B cell (primary cell): ENCODE measurements at regions of chr6 and their contacts with region 1.

Region 1: GRCh38 chr6:132669690-132670291 is 10.8 kb upstream of the TAAR1 start:
- DNase-seq: peak; percentile 61
- ATAC-seq: peak; percentile 60
- H3K4me3 ChIP-seq: no peak overlapping the region
- H3K4me3 Mint-ChIP-seq: peak overlapping the region; percentile 44
- H3K27ac ChIP-seq: no peak overlapping the region
- H3K27ac Mint-ChIP-seq: peak overlapping the region; percentile 0
- H3K4me1 ChIP-seq: peaks cover 4 to 5% of the 10 kb centered on the region in 2 donors
- H3K4me1 Mint-ChIP-seq: peaks cover 6% of the 10 kb centered on the region
- H3K27me3 ChIP-seq: no peaks in the 10 kb centered on the region
- H3K27me3 Mint-ChIP-seq: no peaks in the 10 kb centered on the region
- CTCF ChIP-seq: peak; percentile 79

Region 2: DNA sequence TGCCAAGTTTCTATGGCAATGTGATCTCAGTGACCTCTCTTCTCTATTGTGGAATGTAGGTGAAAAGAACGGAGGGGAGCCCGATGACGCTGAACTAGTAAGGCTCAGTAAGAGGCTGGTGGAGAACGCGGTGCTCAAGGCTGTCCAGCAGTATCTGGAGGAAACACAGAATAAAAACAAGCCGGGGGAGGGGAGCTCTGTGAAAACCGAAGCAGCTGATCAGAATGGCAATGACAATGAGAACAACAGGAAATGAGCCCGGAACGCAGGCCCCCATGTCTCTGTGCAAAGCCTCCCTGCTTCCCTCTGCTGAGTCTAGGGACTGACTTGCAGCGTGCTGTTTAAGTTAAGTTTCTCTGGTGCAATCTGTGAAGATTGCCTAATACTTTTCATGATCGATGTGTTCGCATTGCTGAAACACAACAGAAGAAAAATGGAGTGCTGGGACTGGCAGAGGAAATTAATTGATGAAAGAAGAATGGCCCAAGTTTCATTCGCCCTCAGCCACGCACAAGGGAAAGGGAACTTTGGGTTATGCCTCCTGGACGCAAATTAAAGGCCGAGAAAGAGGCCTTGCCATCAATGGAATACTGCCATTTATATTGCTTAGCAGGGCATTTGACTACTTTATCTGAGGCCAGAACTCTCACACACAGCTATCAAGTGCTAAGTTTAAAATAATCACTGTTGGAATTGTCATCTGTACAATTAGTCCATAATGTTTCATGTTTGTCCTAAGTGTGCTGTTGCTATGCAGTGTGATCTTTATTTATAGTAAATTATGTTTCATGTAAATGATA is 1388.1 kb before region 1 on chr6:
- CTCF ChIA-PET with region 1: no interaction called
- POLR2A ChIA-PET with region 1: no interaction called
- intact Hi-C with region 1: no loop called
- DNase-seq: peak; percentile 50
- ATAC-seq: peak; percentile 95
- H3K4me3 ChIP-seq: peak overlapping the region in 3 of 5 experiments; percentile 35 to 53 (median 41)
- H3K4me3 Mint-ChIP-seq: peak overlapping the region; percentile 86
- H3K27ac ChIP-seq: peak overlapping the region; percentile 42 to 75
- H3K27ac Mint-ChIP-seq: peak overlapping the region; percentile 94
- H3K4me1 ChIP-seq: peaks cover 12 to 18% of the 10 kb centered on the region in 2 donors
- H3K4me1 Mint-ChIP-seq: peaks cover 18% of the 10 kb centered on the region
- H3K27me3 ChIP-seq: no peaks in the 10 kb centered on the region
- H3K27me3 Mint-ChIP-seq: no peaks in the 10 kb centered on the region
- CTCF ChIP-seq: no peak

Region 3: GRCh38 chr6:132530293-132530974 is 139.4 kb before region 1 on chr6:
- CTCF ChIA-PET with region 1: interaction called, 20 read pairs
- POLR2A ChIA-PET with region 1: no interaction called
- intact Hi-C with region 1: loop called (anchors 1 kb)
- DNase-seq: peak; percentile 82
- ATAC-seq: peak; percentile 71
- H3K4me3 ChIP-seq: peak overlapping the region in 4 of 5 experiments; percentile 7 to 54 (median 46)
- H3K4me3 Mint-ChIP-seq: peak overlapping the region; percentile 85
- H3K27ac ChIP-seq: no peak overlapping the region
- H3K27ac Mint-ChIP-seq: peak overlapping the region; percentile 77
- H3K4me1 ChIP-seq: peaks cover 3 to 4% of the 10 kb centered on the region in 2 donors
- H3K4me1 Mint-ChIP-seq: peaks cover 4% of the 10 kb centered on the region
- H3K27me3 ChIP-seq: no peaks in the 10 kb centered on the region
- H3K27me3 Mint-ChIP-seq: no peaks in the 10 kb centered on the region
- CTCF ChIP-seq: peak; percentile 90

Region 4: DNA sequence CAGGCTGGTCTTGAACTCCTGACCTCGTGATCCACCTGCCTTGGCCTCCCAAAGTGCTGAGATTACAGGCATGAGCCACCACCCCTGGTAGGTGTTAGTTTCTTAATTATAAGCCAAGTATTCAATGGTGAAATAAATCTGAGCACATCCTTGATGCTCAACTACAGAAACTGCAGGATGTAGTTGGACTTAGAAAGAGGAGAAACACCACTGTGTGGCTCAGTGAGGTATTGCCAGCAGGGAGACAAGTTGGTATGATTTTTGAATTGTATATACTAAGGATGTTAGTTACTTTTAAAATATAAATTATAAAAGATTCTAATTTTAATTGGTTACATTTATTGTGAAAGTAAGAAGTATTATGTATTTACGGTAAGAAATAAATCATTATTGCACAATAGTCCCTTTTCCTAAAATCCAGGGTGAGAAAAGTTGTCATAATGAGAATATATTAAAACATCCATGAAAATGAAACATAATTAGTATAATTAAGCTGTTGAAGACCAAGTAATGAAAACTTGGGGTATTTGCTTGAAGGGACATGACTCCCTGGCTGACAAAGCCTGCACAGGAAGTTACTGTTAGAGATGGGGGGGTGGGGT is 111.1 kb after region 1 on chr6:
- CTCF ChIA-PET with region 1: interaction called, 17 read pairs
- POLR2A ChIA-PET with region 1: no interaction called
- intact Hi-C with region 1: no loop called
- DNase-seq: no peak
- ATAC-seq: peak; percentile 36
- H3K4me3 ChIP-seq: no peak overlapping the region
- H3K4me3 Mint-ChIP-seq: no peak overlapping the region
- H3K27ac ChIP-seq: no peak overlapping the region
- H3K27ac Mint-ChIP-seq: no peak overlapping the region
- H3K4me1 ChIP-seq: no peaks in the 10 kb centered on the region
- H3K4me1 Mint-ChIP-seq: no peaks in the 10 kb centered on the region
- H3K27me3 ChIP-seq: no peaks in the 10 kb centered on the region
- H3K27me3 Mint-ChIP-seq: no peaks in the 10 kb centered on the region
- CTCF ChIP-seq: peak; percentile 47

Region 5: DNA sequence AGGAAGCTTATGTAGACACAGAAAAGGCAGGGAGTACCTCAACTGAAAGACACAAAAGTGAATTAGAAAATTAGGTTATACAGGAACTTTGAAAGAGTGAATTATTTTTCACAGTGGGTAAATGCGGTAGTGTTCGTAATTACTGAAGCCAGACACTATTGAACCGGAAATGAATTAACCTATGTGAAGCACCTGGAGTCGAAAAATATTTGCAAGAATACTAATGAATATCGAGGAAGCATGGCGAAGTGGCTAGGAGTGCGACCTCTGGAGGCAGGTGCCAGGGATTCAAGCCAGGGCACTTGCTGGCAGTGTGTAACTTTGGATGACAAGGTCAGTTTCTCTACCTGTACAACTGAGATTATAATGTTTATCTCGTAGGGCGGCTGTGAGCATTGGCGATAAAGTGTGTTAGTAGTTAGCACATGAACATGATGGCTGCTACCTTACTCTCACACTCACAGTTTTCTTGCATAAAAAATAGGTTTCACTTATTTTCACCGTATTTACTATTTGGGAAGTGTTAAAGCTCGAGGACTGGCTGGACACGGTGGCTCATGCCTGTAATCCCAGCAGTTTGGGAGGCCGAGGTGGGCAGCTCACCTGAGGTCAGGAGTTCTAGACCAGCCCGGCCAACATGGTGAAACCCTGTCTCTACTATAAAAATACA is 129.2 kb after region 1 on chr6:
- CTCF ChIA-PET with region 1: interaction called, 50 read pairs
- POLR2A ChIA-PET with region 1: interaction called, 7 read pairs
- intact Hi-C with region 1: loop called (anchors 1 kb)
- DNase-seq: peak; percentile 84
- ATAC-seq: peak; percentile 75
- H3K4me3 ChIP-seq: peak overlapping the region in 4 of 5 experiments; percentile 67 to 91 (median 82)
- H3K4me3 Mint-ChIP-seq: peak overlapping the region; percentile 96
- H3K27ac ChIP-seq: peak overlapping the region in 1 of 2 donors; percentile 87
- H3K27ac Mint-ChIP-seq: no peak overlapping the region
- H3K4me1 ChIP-seq: peaks cover 5 to 8% of the 10 kb centered on the region in 2 donors
- H3K4me1 Mint-ChIP-seq: peaks cover 18% of the 10 kb centered on the region
- H3K27me3 ChIP-seq: no peaks in the 10 kb centered on the region
- H3K27me3 Mint-ChIP-seq: no peaks in the 10 kb centered on the region
- CTCF ChIP-seq: peak; percentile 83

Region 6: GRCh38 chr6:132820629-132821381 is 151.0 kb after region 1 on chr6:
- CTCF ChIA-PET with region 1: interaction called, 25 read pairs
- POLR2A ChIA-PET with region 1: no interaction called
- intact Hi-C with region 1: loop called (anchors 1 kb)
- DNase-seq: peak; percentile 14
- ATAC-seq: no peak
- H3K4me3 ChIP-seq: no peak overlapping the region
- H3K4me3 Mint-ChIP-seq: no peak overlapping the region
- H3K27ac ChIP-seq: peak overlapping the region in 1 of 2 donors; percentile 55
- H3K27ac Mint-ChIP-seq: peak overlapping the region; percentile 50
- H3K4me1 ChIP-seq: peaks cover 14 to 15% of the 10 kb centered on the region in 2 donors
- H3K4me1 Mint-ChIP-seq: peaks cover 37% of the 10 kb centered on the region
- H3K27me3 ChIP-seq: no peaks in the 10 kb centered on the region
- H3K27me3 Mint-ChIP-seq: no peaks in the 10 kb centered on the region
- CTCF ChIP-seq: no peak

Region 7: DNA sequence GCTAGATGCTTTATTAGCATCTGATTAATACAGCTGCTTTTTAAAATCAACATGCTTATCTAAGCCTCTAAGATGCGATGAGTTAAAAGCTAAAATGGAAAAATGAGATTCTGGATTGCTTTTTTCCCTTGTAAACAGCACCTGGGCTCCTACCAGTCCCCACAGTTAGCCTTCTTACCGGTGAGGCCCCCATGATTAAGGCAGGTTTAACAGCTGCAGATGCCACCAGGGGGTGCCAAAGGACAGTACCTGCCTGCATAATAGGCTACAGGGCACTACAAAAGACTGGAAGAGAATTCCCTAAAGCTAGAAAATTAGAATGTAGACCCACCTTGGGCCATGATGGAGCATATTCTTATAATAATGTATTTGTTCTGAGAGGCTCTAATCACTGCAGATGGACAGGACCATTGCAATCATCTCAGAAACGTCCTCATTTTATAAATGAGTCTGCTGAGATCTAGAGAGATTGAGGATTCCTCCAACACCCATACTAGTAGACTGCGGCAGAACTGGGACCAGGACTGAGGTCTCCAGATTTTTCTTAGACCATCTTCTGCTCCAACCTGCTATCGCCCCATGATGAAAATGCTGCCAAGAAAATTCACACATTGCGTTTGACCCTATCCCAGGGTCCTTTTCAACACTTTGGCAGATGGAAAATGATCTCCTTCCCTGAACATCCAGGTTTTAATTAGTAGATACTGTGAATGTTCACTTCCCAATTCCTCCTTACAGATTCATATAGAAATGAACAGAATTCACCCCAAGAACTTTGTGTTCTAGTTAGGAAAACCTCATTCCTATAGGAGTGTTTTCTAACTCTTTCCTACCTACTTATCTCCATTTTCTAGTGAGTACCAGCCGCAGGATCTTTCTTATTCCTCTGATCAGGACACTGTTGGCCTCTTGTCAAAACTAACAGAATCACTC is 293.4 kb after region 1 on chr6:
- CTCF ChIA-PET with region 1: interaction called, 17 read pairs
- POLR2A ChIA-PET with region 1: no interaction called
- intact Hi-C with region 1: no loop called
- DNase-seq: peak; percentile 53
- ATAC-seq: peak; percentile 58
- H3K4me3 ChIP-seq: no peak overlapping the region
- H3K4me3 Mint-ChIP-seq: no peak overlapping the region
- H3K27ac ChIP-seq: no peak overlapping the region
- H3K27ac Mint-ChIP-seq: no peak overlapping the region
- H3K4me1 ChIP-seq: no peaks in the 10 kb centered on the region
- H3K4me1 Mint-ChIP-seq: peaks cover 3% of the 10 kb centered on the region
- H3K27me3 ChIP-seq: peaks cover 0 to 13% (median 4%) of the 10 kb centered on the region in 4 experiments
- H3K27me3 Mint-ChIP-seq: peaks cover 31% of the 10 kb centered on the region
- CTCF ChIP-seq: peak; percentile 79

Region 8: DNA sequence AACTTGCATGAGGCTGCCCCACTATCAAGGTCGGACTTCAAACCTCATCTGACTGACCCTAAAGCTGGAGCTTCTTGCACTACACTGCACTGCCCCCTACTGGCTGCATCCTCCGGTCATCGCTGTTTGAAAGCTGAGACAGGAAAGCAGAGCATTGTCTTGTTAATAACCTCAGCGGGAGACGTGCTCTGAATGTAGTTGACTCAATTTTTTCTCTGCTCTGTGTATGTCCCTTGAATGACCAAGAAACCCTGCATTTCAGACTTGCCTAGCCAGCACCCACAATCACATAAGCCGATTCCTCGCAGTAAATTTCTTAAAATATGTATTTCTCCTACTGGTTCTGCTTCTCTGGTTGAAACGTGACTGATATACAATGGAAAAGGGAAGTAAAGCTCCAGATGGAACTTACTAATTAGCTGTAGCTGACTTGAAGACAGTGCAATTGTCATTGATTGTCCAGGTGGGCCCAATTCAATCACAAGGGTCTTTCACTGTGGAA is 1246.9 kb after region 1 on chr6:
- CTCF ChIA-PET with region 1: interaction called, 4 read pairs
- POLR2A ChIA-PET with region 1: no interaction called
- intact Hi-C with region 1: loop called (anchors 10 kb)
- DNase-seq: peak; percentile 71
- ATAC-seq: peak; percentile 69
- H3K4me3 ChIP-seq: no peak overlapping the region
- H3K4me3 Mint-ChIP-seq: peak overlapping the region; percentile 42
- H3K27ac ChIP-seq: no peak overlapping the region
- H3K27ac Mint-ChIP-seq: no peak overlapping the region
- H3K4me1 ChIP-seq: peaks cover 3 to 6% of the 10 kb centered on the region in 2 donors
- H3K4me1 Mint-ChIP-seq: peaks cover 4% of the 10 kb centered on the region
- H3K27me3 ChIP-seq: peaks cover 0 to 7% (median 1%) of the 10 kb centered on the region in 4 experiments
- H3K27me3 Mint-ChIP-seq: peaks cover 21% of the 10 kb centered on the region
- CTCF ChIP-seq: peak; percentile 91